H1 (cell line): ENCODE measurements at regions of chr13 and their contacts with region 1.

Region 1: GRCh38 chr13:60329221-60329983 is 67.6 kb upstream of the TDRD3 start:
- DNase-seq: peak; percentile 27 to 71
- H3K4me3 ChIP-seq: no peak overlapping the region
- H3K27ac ChIP-seq: no peak overlapping the region
- H3K4me1 ChIP-seq: no peaks in the 10 kb centered on the region
- H3K27me3 ChIP-seq: no peaks in the 10 kb centered on the region
- CTCF ChIP-seq: peak; percentile 44 to 86 (median 80)
- EP300 ChIP-seq: no peak
- POLR2A ChIP-seq: no peak
- RAD21 ChIP-seq: peak; percentile 98

Region 2: GRCh38 chr13:59906413-59907049 is 422.9 kb before region 1 on chr13:
- CTCF ChIA-PET with region 1: interaction called, 21 read pairs
- POLR2A ChIA-PET with region 1: no interaction called
- DNase-seq: no peak
- H3K4me3 ChIP-seq: no peak overlapping the region
- H3K27ac ChIP-seq: no peak overlapping the region
- H3K4me1 ChIP-seq: no peaks in the 10 kb centered on the region
- H3K27me3 ChIP-seq: no peaks in the 10 kb centered on the region
- CTCF ChIP-seq: peak in 2 of 3 experiments; percentile 52 to 54; a peak in 3 of 4 replicates
- EP300 ChIP-seq: no peak
- POLR2A ChIP-seq: no peak
- RAD21 ChIP-seq: peak; percentile 77 to 79

Region 3: DNA sequence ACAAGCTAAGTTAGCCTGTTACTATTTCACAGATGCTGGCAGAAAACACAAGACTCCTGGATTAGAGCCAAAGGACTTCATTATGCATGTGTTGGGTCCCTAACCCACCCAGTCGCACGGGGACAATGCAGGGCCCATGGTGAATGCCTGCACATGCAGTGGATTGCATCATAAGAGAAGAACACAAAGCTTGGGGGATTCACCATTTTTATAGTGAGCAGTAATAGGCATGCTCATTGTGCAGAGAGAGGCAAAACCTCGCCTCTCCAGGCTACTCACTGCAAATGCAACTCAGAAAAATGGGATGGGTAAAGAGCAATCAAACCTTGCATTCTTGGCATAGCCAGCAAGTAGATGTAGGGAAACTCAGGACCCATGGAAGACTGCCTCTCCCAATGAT is 281.5 kb before region 1 on chr13:
- CTCF ChIA-PET with region 1: no interaction called
- POLR2A ChIA-PET with region 1: no interaction called
- DNase-seq: no peak
- H3K4me3 ChIP-seq: no peak overlapping the region
- H3K27ac ChIP-seq: no peak overlapping the region
- H3K4me1 ChIP-seq: no peaks in the 10 kb centered on the region; a peak in 1 of 7 replicates
- H3K27me3 ChIP-seq: no peaks in the 10 kb centered on the region
- CTCF ChIP-seq: no peak
- EP300 ChIP-seq: no peak
- POLR2A ChIP-seq: no peak
- RAD21 ChIP-seq: no peak; a peak in 1 of 4 replicates

Region 4: DNA sequence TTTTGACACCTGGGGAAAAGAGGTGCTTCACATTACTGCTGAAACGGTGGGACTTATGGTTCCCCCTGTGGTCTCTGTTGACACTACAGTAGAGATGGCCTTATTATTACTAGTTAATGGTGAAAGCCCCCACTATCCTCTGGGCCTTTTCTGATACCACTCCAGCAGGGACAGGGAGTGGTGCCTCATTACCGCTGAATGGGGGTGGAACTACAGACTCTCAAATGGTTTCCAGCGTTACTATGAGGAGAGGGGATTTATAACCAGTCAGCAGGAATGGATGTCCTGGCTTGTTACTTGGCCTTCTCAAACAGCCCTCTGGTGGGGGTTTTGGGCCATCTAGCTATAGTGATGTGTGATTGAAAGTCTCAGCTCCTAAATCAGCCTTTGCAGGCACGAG is 69.0 kb before region 1 on chr13:
- CTCF ChIA-PET with region 1: interaction called, 10 read pairs
- POLR2A ChIA-PET with region 1: no interaction called
- DNase-seq: no peak
- H3K4me3 ChIP-seq: no peak overlapping the region
- H3K27ac ChIP-seq: no peak overlapping the region
- H3K4me1 ChIP-seq: peaks cover 1 to 8% (median 5%) of the 10 kb centered on the region in 4 experiments; a peak in 5 of 7 replicates
- H3K27me3 ChIP-seq: no peaks in the 10 kb centered on the region
- CTCF ChIP-seq: peak in 2 of 3 experiments; percentile 0 to 41; a peak in 1 of 4 replicates
- EP300 ChIP-seq: no peak
- POLR2A ChIP-seq: no peak
- RAD21 ChIP-seq: peak; percentile 17 to 40

Region 5: DNA sequence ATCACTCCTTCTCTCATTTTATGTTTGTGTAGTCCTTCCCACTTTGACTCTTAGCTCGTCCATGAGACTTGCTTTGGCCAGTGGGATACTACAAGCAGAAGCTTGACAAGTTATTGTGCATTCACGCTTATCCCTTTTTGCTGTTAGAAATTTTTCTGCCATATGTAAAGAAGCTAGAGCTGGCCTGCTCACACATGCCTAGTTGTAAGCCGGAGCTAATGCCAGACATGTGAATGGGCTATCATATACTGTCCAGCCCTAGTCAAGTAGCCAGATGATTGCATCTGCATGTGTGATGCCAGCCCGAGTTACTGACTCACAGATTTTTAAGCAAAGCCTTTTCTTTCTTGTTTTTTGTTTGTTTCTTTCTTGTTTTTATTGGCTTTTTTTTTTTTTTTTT is 528.3 kb after region 1 on chr13:
- CTCF ChIA-PET with region 1: no interaction called
- POLR2A ChIA-PET with region 1: no interaction called
- DNase-seq: no peak
- H3K4me3 ChIP-seq: no peak overlapping the region
- H3K27ac ChIP-seq: no peak overlapping the region
- H3K4me1 ChIP-seq: no peaks in the 10 kb centered on the region
- H3K27me3 ChIP-seq: no peaks in the 10 kb centered on the region
- CTCF ChIP-seq: no peak
- EP300 ChIP-seq: no peak
- POLR2A ChIP-seq: no peak
- RAD21 ChIP-seq: no peak